MCF 10A (cell line): ENCODE measurements at regions of chr1 and their contacts with region 1.

Region 1: DNA sequence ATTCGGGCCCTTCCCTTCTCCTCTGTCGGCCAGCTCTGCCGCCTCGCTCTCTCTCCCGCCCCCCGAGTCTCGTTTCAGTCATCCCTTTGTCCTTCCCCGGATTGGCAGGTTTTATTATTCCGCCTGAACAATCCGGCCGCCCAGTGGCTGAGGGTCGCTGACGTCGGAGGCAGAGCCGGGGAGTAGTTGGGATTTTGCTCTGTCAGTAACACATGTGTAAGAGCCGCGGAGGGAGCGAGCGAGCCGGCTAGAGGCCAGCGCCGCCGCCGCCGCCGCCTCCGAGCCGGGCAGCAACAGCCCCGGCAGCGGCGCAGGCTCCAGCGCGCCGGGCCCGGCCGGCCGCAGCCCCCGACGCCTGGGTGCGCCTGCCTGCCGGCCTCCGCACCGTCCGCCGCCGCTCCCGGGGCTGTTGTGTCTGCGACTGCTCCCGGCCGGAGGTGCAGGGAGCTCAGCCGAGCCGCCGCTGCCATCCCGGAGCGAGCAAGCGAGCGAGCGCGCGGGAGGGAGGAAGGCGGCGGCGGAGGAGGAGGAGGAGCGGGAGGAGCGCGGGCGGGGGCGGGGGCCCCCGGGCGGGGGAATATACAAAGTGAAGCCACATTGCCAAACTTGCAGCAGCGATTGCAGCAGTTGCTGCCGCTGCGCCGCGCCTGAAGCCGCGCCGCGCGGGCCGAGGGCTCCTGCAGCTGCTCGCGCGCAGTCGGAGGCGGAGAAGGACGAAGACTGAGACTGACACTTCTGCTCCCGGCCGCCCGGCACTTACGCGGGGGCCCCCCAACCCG is at the start of gene LMO4:
- DNase-seq: peak; percentile 98
- H3K4me3 Mint-ChIP-seq: peak within 1 kb of the TSS; percentile 87
- H3K27ac Mint-ChIP-seq: peak within 1 kb of the TSS; percentile 88
- H3K4me1 Mint-ChIP-seq: peaks cover 21% of the 10 kb centered on the region
- H3K27me3 Mint-ChIP-seq: no peaks in the 10 kb centered on the region
- CTCF ChIP-seq: no peak
- total RNA-seq, gene LMO4: 23.4 and 29.4 TPM in 2 replicates

Region 2: DNA sequence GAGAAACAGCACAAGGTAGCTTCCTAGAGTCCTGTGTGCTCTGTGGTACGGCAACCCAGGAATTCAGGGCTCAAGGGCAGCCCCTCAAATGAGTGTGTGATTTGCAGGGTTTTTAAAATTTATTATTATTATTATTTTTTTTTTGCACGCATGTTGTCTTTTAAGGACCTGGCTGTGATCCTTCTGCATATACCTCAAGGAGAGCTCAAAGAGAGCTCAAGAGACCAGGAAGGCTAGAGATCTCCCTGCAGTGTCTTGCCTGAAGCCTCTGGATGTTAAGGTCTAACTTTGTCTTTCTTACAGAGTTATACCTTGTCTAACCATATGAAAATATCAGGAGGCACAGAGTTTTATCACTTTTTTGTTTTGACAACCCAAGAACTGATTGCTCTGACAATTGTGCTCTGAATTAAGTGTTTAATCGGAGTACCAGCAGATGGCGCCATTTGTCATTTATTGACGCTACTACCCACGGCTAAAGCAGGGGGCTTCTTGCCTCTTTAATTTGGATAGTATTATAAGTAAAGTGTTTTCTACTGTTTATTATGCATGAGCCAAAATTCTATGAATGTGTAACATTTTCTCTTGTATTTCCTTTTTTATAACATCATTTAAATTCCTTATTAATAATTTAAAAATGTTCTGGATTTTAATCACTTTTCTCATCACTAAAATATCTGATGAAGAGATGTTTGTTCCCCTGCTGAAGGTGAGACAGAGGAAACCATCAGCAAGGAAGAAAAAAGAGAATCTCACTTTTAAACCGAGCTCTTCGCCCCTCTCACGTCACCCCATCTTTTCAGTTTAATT is 35.6 kb before region 1 on chr1:
- CTCF ChIA-PET with region 1: interaction called, 20 read pairs
- POLR2A ChIA-PET with region 1: no interaction called
- intact Hi-C with region 1: no loop called
- DNase-seq: peak; percentile 69
- H3K4me3 Mint-ChIP-seq: no peak overlapping the region
- H3K27ac Mint-ChIP-seq: no peak overlapping the region
- H3K4me1 Mint-ChIP-seq: no peaks in the 10 kb centered on the region
- H3K27me3 Mint-ChIP-seq: peaks cover 25% of the 10 kb centered on the region
- CTCF ChIP-seq: peak; percentile 69

Region 3: GRCh38 chr1:87346122-87346814 is 17.8 kb after region 1 on chr1:
- CTCF ChIA-PET with region 1: interaction called, 12 read pairs
- POLR2A ChIA-PET with region 1: interaction called, 4 read pairs
- intact Hi-C with region 1: no loop called
- DNase-seq: no peak
- H3K4me3 Mint-ChIP-seq: no peak overlapping the region
- H3K27ac Mint-ChIP-seq: no peak overlapping the region
- H3K4me1 Mint-ChIP-seq: no peaks in the 10 kb centered on the region
- H3K27me3 Mint-ChIP-seq: no peaks in the 10 kb centered on the region
- CTCF ChIP-seq: no peak

Region 4: DNA sequence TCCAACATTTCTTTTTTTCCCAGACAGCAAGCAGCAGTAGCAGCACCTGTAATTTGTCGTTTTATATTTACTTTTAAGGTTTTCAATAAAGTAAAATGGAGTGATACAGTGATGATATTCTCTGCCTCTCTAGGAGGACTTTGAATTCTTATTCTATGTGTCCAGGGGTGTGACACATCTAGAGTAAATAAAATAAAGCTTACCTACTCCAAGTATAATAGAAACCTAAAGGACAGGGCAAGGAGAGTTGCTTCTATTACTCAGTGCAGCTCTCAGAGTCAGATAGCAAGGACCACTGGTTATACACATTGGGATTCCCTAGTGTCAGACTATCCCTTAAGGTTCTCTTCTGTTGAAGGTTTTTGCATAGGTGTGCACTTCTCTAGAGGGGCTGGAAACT is 96.1 kb after region 1 on chr1:
- CTCF ChIA-PET with region 1: interaction called, 3 read pairs
- POLR2A ChIA-PET with region 1: interaction called, 16 read pairs
- intact Hi-C with region 1: no loop called
- DNase-seq: no peak
- H3K4me3 Mint-ChIP-seq: no peak overlapping the region
- H3K27ac Mint-ChIP-seq: no peak overlapping the region
- H3K4me1 Mint-ChIP-seq: peaks cover 5% of the 10 kb centered on the region
- H3K27me3 Mint-ChIP-seq: peaks cover 8% of the 10 kb centered on the region
- CTCF ChIP-seq: no peak

Region 5: GRCh38 chr1:88061492-88062177 is 733.2 kb after region 1 on chr1:
- CTCF ChIA-PET with region 1: interaction called, 11 read pairs
- POLR2A ChIA-PET with region 1: interaction called, 22 read pairs
- intact Hi-C with region 1: loop called (anchors 1 kb)
- DNase-seq: peak; percentile 70
- H3K4me3 Mint-ChIP-seq: no peak overlapping the region
- H3K27ac Mint-ChIP-seq: no peak overlapping the region
- H3K4me1 Mint-ChIP-seq: peaks cover 9% of the 10 kb centered on the region
- H3K27me3 Mint-ChIP-seq: no peaks in the 10 kb centered on the region
- CTCF ChIP-seq: peak; percentile 81